ENCODE measurements at regions of chr9 and their contacts with region 1.

Region 1: DNA sequence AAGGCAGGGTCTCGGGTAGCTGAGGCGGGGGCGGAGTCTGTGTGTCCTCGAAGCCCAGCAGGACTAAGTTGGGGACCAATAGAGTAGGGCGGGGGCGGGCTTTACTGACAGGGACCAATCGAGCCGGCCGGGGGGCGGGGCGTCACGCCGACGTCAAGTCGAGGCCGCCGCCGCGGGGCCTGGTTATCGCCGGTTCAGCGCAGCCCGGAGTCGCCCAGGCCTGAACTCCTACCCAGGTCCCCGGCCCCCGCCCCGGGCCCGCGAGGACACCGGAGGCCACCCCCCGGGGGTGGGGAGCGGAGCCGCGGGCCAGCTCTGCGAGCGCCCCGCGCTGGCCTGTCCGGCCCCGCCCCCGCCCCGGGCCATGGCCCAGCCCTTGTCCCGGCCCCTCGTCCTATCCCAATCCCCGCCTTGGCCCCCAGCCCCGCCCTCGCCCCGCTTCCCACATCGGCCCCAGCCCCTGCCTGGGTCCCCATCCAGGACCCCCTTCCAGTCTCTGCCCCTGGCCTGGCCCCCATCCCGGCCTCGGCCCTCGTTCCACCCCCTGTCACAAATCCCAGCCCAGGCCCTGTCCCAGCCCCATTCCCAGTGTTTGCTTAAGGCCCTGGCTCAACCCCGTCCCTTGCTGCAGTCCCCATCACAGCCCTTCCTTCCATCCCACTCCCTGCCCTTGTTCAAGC is at the start of gene TMEM8B:
- DNase-seq: peak; percentile 51
- H3K4me3 ChIP-seq: peak within 1 kb of the TSS; percentile 64
- H3K27me3 ChIP-seq: no peaks in the 10 kb centered on the region
- CTCF ChIP-seq: no peak
- polyA plus RNA-seq, gene TMEM8B: 3.4 and 5.6 TPM in 2 replicates

Region 2: GRCh38 chr9:35783418-35783817 is 45.8 kb before region 1 on chr9:
- CTCF ChIA-PET with region 1: interaction called, 84 read pairs
- POLR2A ChIA-PET with region 1: no interaction called
- DNase-seq: no peak
- H3K4me3 ChIP-seq: no peak overlapping the region
- H3K27me3 ChIP-seq: peaks cover 15% of the 10 kb centered on the region
- CTCF ChIP-seq: no peak

Region 3: DNA sequence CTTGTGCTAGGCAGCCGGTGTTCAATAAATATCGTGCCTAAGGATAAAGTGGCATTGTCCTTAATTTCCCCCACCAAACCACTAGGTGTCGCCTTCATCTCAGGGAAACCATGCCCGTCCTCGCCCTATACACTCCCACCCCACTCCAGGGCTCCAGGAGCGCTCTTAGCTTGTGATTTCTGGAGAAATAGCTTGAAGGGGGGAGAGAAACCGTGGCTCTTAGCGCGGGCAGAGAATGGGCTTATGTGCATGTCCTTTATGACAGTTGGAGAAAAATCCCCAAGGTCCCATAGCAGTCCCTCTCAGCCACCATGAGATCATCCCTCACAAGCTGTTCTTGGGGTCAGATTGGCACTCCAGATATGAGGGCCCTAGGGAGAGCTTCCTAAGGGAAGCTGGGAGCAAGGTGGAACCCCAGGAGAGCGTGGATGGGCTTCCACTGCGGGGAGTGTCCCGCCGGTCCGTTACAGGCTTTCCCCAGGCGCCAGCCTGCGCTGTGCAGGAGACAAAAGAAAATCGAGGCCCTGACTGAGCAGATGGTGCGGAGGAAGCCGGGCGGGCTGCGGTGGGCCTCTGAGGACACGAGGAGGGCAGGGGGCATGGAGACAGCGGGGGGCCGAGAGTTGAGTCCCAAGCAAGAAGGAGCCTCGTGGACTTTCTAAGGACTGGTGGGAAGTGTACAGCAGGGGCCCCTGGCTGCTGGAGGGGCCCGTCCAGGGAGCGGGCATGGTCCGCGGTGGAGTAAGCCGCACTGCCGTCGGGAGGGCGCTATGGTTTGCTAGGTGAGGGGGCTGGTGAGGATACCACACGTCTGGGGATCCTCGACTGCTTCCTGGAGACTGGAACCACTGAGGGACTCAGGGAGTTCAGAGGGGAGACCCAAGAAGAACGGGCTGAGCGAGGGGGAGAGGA is 38.6 kb before region 1 on chr9:
- CTCF ChIA-PET with region 1: interaction called, 84 read pairs
- POLR2A ChIA-PET with region 1: no interaction called
- DNase-seq: peak; percentile 18
- H3K4me3 ChIP-seq: peak overlapping the region; percentile 61
- H3K27me3 ChIP-seq: peaks cover 2% of the 10 kb centered on the region; the same call in 1 of the 2 replicates
- CTCF ChIP-seq: peak; percentile 85

Region 4: DNA sequence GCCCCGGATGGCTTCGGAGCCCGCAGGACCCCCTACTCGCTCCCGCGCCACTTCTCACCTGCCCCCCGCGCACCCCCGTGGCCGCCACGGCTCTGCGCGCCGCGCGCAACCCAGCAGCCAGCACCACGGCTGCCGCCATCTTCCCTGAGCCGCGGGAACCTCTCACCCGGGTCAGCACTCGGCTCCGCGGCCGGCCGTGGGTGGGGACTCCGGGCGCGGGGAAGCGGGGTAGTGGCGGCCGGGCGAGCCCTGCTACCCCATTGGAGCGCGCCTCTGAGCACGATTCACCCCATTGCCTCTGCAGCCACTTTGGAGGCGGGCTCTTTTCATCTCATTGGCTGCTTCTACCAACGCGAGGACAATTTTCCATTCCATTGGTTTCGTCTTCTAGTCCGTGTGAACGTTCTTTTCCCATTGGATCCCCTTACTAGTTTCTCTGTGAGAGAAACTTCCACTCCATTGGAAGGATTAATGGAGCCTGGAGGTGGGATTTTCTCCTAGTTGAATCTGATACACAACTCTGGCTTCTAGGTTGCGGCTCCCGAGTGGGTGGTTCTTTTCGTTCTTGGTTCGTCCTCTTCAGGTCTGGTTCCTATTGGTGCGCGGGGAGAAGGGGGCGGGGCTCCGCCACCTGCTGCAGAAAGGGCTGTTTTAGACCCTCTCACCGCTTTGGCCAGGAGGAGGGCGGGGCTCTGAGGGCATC is 14.2 kb before region 1 on chr9 and contains the start of gene HINT2:
- CTCF ChIA-PET with region 1: interaction called, 33 read pairs
- POLR2A ChIA-PET with region 1: no interaction called
- DNase-seq: peak; percentile 97
- H3K4me3 ChIP-seq: peak within 1 kb of the TSS; percentile 59
- H3K27me3 ChIP-seq: peaks cover 2% of the 10 kb centered on the region; the same call in 1 of the 2 replicates
- CTCF ChIP-seq: no peak
- polyA plus RNA-seq, gene HINT2: 20.9 and 30.0 TPM in 2 replicates

Region 5: GRCh38 chr9:35859310-35859989 is 30.2 kb after region 1 on chr9:
- CTCF ChIA-PET with region 1: interaction called, 13 read pairs
- POLR2A ChIA-PET with region 1: no interaction called
- DNase-seq: no peak
- H3K4me3 ChIP-seq: no peak overlapping the region
- H3K27me3 ChIP-seq: peaks cover 12% of the 10 kb centered on the region
- CTCF ChIP-seq: no peak

Region 6: GRCh38 chr9:35864695-35865255 is 35.6 kb after region 1 on chr9:
- CTCF ChIA-PET with region 1: interaction called, 11 read pairs
- POLR2A ChIA-PET with region 1: no interaction called
- DNase-seq: no peak
- H3K4me3 ChIP-seq: no peak overlapping the region
- H3K27me3 ChIP-seq: peaks cover 12% of the 10 kb centered on the region
- CTCF ChIP-seq: no peak

Region 7: GRCh38 chr9:35882263-35882848 is 53.1 kb after region 1 on chr9:
- CTCF ChIA-PET with region 1: interaction called, 83 read pairs
- POLR2A ChIA-PET with region 1: no interaction called
- DNase-seq: peak; percentile 20
- H3K4me3 ChIP-seq: no peak overlapping the region
- H3K27me3 ChIP-seq: no peaks in the 10 kb centered on the region
- CTCF ChIP-seq: peak; percentile 99